Prostate gland (tissue), 2 donors: ENCODE measurements at regions of chr1 and their contacts with region 1.

Region 1: GRCh38 chr1:43073490-43074230 is 98.4 kb downstream of the EBNA1BP2 start:
- DNase-seq: peak; percentile 75
- H3K4me3 ChIP-seq: no peak overlapping the region
- H3K27ac ChIP-seq: no peak overlapping the region
- H3K4me1 ChIP-seq: no peaks in the 10 kb centered on the region
- H3K27me3 ChIP-seq: no peaks in the 10 kb centered on the region
- CTCF ChIP-seq: peak; percentile 71 to 94 (median 91)
- POLR2A ChIP-seq: no peak

Region 2: DNA sequence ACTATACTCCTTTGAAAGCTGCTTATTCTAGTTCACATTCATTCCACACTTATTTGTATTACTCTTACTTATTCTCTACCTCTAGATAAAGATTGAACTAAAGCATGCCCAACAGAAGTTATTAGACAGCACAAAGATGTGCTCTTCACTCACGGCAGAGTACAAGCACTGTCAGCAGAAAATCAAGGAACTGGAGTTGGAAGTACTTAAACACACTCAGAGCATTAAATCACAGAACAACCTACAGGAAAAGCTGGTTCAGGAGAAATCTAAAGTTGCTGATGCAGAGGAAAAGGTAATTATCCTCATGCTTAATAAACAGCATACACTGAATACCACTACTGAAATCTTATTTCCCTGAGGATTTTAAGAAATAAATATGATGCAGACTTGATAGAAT is 496.7 kb before region 1 on chr1:
- intact Hi-C with region 1: loop called (anchors 5 kb)
- DNase-seq: no peak
- H3K4me3 ChIP-seq: no peak overlapping the region
- H3K27ac ChIP-seq: no peak overlapping the region
- H3K4me1 ChIP-seq: no peaks in the 10 kb centered on the region
- H3K27me3 ChIP-seq: no peaks in the 10 kb centered on the region
- CTCF ChIP-seq: no peak
- POLR2A ChIP-seq: no peak

Region 3: GRCh38 chr1:42736150-42736850 is 337.4 kb before region 1 on chr1:
- intact Hi-C with region 1: no loop called
- DNase-seq: no peak
- H3K4me3 ChIP-seq: no peak overlapping the region
- H3K27ac ChIP-seq: no peak overlapping the region
- H3K4me1 ChIP-seq: no peaks in the 10 kb centered on the region
- H3K27me3 ChIP-seq: no peaks in the 10 kb centered on the region
- CTCF ChIP-seq: no peak
- POLR2A ChIP-seq: no peak

Region 4: DNA sequence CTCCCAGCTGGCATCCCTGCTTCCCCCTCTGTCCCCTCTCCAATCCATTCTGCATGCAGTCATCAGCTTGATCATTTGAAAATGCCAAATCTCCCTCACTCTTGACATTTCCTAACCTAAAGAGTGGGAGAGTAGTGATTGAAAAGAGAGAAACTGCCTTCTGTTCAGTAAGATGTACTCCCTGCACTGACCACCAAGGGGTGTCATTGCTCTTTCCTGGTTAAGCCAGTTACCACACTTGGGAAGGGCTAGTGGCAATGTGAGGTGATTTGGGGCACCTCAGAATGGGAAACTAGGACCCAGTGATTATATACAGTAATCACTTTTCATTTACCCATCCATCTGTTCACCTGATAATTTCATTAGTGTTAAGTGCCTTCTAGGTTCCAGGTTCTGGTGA is 295.8 kb before region 1 on chr1:
- intact Hi-C with region 1: loop called (anchors 5 kb)
- DNase-seq: no peak
- H3K4me3 ChIP-seq: no peak overlapping the region
- H3K27ac ChIP-seq: no peak overlapping the region
- H3K4me1 ChIP-seq: no peaks in the 10 kb centered on the region
- H3K27me3 ChIP-seq: no peaks in the 10 kb centered on the region
- CTCF ChIP-seq: peak in 3 of 4 experiments; percentile 25 to 59 (median 46)
- POLR2A ChIP-seq: no peak

Region 5: GRCh38 chr1:42913426-42914091 is 160.1 kb before region 1 on chr1:
- intact Hi-C with region 1: loop called (anchors 2 kb)
- DNase-seq: peak; percentile 61
- H3K4me3 ChIP-seq: no peak overlapping the region
- H3K27ac ChIP-seq: no peak overlapping the region
- H3K4me1 ChIP-seq: no peaks in the 10 kb centered on the region
- H3K27me3 ChIP-seq: no peaks in the 10 kb centered on the region
- CTCF ChIP-seq: peak; percentile 53 to 91 (median 78)
- POLR2A ChIP-seq: no peak

Region 6: GRCh38 chr1:42931108-42931539 is 142.5 kb before region 1 on chr1:
- intact Hi-C with region 1: loop called (anchors 5 kb)
- DNase-seq: no peak
- H3K4me3 ChIP-seq: no peak overlapping the region
- H3K27ac ChIP-seq: peak overlapping the region in 1 of 2 donors; percentile 85
- H3K4me1 ChIP-seq: peaks cover 21% of the 10 kb centered on the region
- H3K27me3 ChIP-seq: no peaks in the 10 kb centered on the region
- CTCF ChIP-seq: peak in 3 of 4 experiments; percentile 50 to 63 (median 56)
- POLR2A ChIP-seq: no peak

Region 7: DNA sequence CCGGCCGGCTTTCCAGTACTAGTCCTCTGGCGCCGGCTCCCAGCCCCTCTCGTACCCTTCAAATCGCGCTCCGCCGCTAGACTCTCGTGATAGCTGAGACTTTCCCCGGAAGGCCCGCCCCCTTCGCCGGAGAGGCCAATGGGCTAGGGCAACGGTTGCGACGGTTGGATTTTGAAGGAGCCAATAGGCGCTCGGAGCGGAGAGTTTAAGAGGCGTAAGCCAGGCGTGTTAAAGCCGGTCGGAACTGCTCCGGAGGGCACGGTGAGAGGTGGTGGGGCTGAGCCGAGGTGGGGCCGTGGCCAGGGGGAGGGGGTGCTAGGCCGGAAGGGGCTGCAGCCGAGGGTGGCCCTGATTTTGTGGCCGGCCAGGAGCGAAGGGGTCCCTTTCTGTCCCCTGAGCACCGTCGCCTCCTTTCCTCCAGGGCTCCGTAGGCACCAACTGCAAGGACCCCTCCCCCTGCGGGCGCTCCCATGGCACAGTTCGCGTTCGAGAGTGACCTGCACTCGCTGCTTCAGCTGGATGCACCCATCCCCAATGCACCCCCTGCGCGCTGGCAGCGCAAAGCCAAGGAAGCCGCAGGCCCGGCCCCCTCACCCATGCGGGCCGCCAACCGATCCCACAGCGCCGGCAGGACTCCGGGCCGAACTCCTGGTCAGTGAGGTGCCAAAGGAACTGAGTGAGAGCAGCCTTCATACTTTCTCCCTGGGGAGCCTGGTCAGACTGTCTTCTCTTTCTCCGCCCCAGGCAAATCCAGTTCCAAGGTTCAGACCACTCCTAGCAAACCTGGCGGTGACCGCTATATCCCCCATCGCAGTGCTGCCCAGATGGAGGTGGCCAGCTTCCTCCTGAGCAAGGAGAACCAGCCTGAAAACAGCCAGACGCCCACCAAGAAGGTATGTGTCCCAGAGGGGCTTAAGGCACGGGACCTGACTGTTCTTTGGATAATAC is 285.4 kb after region 1 on chr1 and contains the start of gene CDC20:
- intact Hi-C with region 1: no loop called
- DNase-seq: peak; percentile 98
- H3K4me3 ChIP-seq: peak within 1 kb of the TSS; percentile 56 to 59
- H3K27ac ChIP-seq: peak within 1 kb of the TSS; percentile 87 to 92
- H3K4me1 ChIP-seq: peaks cover 5% of the 10 kb centered on the region
- H3K27me3 ChIP-seq: no peaks in the 10 kb centered on the region
- CTCF ChIP-seq: no peak
- POLR2A ChIP-seq: peak; percentile 2
- total RNA-seq, gene CDC20: 2.2 to 14.9 TPM